AG04449 (cell line): ENCODE measurements at regions of chr7 and their contacts with region 1.

Region 1: DNA sequence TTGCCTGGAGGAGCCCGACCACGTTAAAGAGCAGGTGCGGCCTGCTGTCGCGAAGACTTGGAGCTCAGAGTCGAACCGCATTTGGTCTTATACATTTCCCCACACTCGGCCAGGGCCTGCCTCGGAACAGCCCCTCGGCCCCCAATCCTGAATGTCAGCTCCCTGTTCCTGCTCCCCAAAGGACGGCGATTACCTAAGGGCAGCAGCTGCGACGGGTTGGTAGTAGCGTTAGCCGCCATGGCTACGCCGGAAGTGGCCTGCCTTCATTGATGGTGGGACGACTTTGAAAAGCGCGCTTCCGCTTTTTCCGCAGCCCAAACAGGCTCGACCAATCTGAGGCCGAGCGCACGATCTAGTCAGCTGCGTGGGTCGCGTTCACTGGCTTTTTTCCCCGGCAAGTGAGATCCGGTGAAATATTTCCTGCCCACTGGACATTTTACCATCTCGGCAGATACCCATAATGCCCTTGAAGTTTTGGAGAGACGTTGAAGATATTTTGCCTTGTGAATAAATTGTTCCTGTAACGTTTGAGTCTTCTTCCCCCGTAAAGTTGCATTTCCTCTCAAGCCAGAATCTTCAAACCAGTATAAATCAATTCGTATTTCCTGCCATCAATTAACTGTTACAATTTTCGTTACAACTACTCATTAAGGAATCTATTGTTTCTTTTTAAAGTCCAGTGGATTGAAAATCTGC is at the start of gene LSM5:
- DNase-seq: no peak
- H3K4me3 ChIP-seq: peak within 1 kb of the TSS; percentile 87
- CTCF ChIP-seq: no peak

Region 2: DNA sequence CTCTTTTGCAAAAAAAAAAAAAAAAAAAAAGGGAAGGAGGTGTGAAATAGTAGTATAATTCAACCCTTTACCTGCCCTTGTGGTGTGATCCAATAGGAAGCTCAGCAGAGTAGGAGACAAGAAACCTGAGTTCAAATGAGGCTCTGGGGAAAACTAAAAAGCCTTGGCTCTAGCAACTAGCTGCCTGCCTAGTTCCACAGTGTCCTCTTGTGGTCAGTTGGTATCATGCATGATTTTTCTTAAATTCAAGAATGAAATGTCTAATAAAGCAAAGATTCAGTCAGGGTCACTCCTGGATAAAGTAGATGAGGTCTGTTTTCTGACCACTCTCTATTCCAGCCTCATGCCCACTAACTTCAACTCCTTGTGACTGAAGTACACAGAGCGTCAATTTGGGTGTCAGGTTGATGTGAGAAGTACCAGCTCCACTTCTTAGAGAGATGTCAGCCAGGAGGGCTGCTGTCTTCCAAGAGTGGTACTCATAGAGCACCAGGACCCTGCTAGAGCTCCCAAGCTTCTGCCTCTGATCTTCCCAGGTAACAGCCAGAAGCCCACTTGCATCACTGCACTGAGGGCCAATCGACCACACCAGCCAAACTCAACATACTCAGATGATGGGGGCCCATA is 10.6 kb before region 1 on chr7:
- CTCF ChIA-PET with region 1: interaction called, 33 read pairs
- POLR2A ChIA-PET with region 1: no interaction called
- DNase-seq: no peak
- H3K4me3 ChIP-seq: no peak overlapping the region
- CTCF ChIP-seq: peak; percentile 81